ENCODE measurements at regions of chr10 and their contacts with region 1.

Region 1: GRCh38 chr10:98340261-98340939 is 72.4 kb upstream of the LOXL4 start:
- DNase-seq: no peak
- ATAC-seq: peak in 1 of 4 experiments; percentile 19
- H3K4me3 ChIP-seq: no peak overlapping the region
- H3K4me3 Mint-ChIP-seq: no peak overlapping the region
- H3K27ac ChIP-seq: peak overlapping the region; percentile 28
- H3K27ac Mint-ChIP-seq: peak overlapping the region in 1 of 2 donors; percentile 52
- H3K4me1 ChIP-seq: peaks cover 0 to 16% of the 10 kb centered on the region in 2 experiments
- H3K4me1 Mint-ChIP-seq: peaks cover 0 to 17% (median 13%) of the 10 kb centered on the region in 3 donors
- H3K27me3 ChIP-seq: peaks cover 0 to 6% of the 10 kb centered on the region in 2 experiments
- H3K27me3 Mint-ChIP-seq: peaks cover 13 to 26% of the 10 kb centered on the region in 2 donors

Region 2: GRCh38 chr10:98169379-98169778 is 171.0 kb before region 1 on chr10:
- CTCF ChIA-PET with region 1: no interaction called
- POLR2A ChIA-PET with region 1: interaction called in 1 of 2 experiments, 14 read pairs
- DNase-seq: no peak
- ATAC-seq: no peak
- H3K4me3 ChIP-seq: no peak overlapping the region
- H3K4me3 Mint-ChIP-seq: no peak overlapping the region
- H3K27ac ChIP-seq: no peak overlapping the region
- H3K27ac Mint-ChIP-seq: no peak overlapping the region
- H3K4me1 ChIP-seq: peaks cover 0 to 3% of the 10 kb centered on the region in 2 experiments
- H3K4me1 Mint-ChIP-seq: peaks cover 31 to 37% (median 36%) of the 10 kb centered on the region in 3 donors
- H3K27me3 ChIP-seq: no peaks in the 10 kb centered on the region
- H3K27me3 Mint-ChIP-seq: no peaks in the 10 kb centered on the region

Measured in T-cell (primary cell).